Natural killer cell (primary cell): ENCODE measurements at regions of chr11 and their contacts with region 1.

Region 1: GRCh38 chr11:73184953-73185671 is 33.0 kb upstream of the P2RY2 start:
- DNase-seq: peak; percentile 44 to 63
- ATAC-seq: peak; percentile 75 to 88 (median 82)
- H3K4me3 ChIP-seq: no peak overlapping the region
- H3K4me3 Mint-ChIP-seq: no peak overlapping the region
- H3K27ac ChIP-seq: no peak overlapping the region
- H3K27ac Mint-ChIP-seq: no peak overlapping the region
- H3K4me1 ChIP-seq: peaks cover 35% of the 10 kb centered on the region
- H3K4me1 Mint-ChIP-seq: peaks cover 5 to 6% of the 10 kb centered on the region in 2 donors
- H3K27me3 ChIP-seq: no peaks in the 10 kb centered on the region
- H3K27me3 Mint-ChIP-seq: peaks cover 12 to 14% of the 10 kb centered on the region in 2 donors
- CTCF ChIP-seq: peak; percentile 75

Region 2: DNA sequence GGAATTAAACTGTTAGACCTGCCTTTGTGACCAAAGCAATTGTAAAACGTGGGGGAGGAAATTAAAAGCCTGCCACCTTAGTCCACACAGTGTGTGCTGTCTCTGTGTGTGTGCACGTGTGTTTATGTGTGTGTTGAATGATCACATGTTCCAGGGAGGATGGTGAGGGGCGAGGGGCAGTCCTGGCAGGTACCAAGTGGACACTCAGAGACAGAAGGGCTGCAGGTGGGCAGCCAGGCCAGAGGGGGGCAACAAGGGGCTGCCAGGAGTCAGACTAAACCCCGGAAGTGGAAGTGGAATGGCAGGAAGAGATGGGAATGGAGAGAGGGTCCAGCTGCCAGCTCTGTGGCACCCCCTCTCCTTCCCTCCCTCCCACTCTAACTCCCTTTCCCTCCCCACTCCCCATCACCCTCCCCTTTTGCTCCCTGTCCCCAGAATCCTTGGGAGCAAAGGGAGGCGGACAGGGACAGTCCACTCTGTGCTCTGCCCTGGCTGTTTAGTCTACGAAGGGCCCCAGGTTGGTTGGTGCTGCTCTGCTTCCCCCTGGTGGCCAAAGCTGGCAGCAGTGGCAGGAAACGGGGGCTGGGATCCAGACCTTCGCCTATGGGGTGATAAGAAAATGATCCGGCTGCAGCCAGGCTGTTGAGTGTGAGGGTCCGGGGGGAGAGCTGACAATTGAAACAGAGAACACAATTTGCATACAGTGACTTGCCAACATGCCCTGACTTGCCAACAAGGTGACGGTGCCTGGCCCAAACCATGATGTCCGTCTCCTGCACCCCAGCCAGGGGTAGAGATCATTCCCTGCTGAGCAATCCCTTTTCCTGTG is 57.4 kb after region 1 on chr11:
- intact Hi-C with region 1: loop called (anchors 2 kb)
- DNase-seq: peak; percentile 69 to 80
- ATAC-seq: peak; percentile 87 to 96 (median 93)
- H3K4me3 ChIP-seq: no peak overlapping the region
- H3K4me3 Mint-ChIP-seq: no peak overlapping the region
- H3K27ac ChIP-seq: no peak overlapping the region
- H3K27ac Mint-ChIP-seq: peak overlapping the region in 1 of 2 donors; percentile 35
- H3K4me1 ChIP-seq: peaks cover 8% of the 10 kb centered on the region
- H3K4me1 Mint-ChIP-seq: peaks cover 0 to 6% of the 10 kb centered on the region in 2 donors
- H3K27me3 ChIP-seq: no peaks in the 10 kb centered on the region
- H3K27me3 Mint-ChIP-seq: peaks cover 0 to 3% of the 10 kb centered on the region in 2 donors
- CTCF ChIP-seq: peak; percentile 77

Region 3: DNA sequence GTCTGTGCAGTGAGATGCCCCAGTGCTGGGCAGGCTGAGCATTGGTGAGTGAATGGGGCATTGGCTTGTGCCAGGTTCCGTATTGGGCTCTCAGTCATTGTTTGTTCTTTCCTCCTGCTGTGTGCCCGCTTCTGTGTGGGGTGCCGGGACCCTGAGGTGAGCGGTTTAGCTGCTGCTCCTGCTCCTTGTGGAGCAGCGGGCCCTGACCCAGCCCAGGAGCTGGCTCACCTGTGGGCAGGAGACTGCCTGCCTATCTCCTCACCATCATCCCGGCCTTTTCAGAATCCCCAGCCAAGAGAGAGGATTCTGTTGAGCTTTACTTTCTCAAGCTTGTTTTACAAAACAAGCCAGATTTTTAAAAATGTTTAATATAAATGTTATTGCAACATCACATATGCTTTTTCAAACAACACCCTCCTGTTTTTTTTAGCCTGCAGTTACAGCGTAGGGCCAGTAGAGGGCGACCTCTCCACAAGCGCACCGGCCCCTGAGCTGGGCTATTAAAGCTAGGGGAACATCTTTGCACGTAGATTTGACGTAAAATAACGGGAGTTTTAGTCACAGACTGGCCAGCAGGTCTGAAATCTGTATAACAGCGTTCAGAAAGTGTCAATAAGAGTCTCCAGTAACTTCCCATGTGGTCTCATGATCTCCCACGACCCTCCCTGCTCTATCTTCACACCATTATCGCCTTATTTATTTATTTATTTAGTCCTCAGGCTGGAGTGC is 166.0 kb after region 1 on chr11:
- intact Hi-C with region 1: no loop called
- DNase-seq: peak; percentile 55 to 88
- ATAC-seq: peak; percentile 94 to 98 (median 95)
- H3K4me3 ChIP-seq: no peak overlapping the region
- H3K4me3 Mint-ChIP-seq: no peak overlapping the region
- H3K27ac ChIP-seq: no peak overlapping the region
- H3K27ac Mint-ChIP-seq: peak overlapping the region; percentile 53 to 54
- H3K4me1 ChIP-seq: no peaks in the 10 kb centered on the region
- H3K4me1 Mint-ChIP-seq: peaks cover 0 to 5% of the 10 kb centered on the region in 2 donors
- H3K27me3 ChIP-seq: no peaks in the 10 kb centered on the region
- H3K27me3 Mint-ChIP-seq: peaks cover 0 to 3% of the 10 kb centered on the region in 2 donors
- CTCF ChIP-seq: peak; percentile 98